Panc1 (cell line): ENCODE measurements at regions of chr13 and their contacts with region 1.

Region 1: DNA sequence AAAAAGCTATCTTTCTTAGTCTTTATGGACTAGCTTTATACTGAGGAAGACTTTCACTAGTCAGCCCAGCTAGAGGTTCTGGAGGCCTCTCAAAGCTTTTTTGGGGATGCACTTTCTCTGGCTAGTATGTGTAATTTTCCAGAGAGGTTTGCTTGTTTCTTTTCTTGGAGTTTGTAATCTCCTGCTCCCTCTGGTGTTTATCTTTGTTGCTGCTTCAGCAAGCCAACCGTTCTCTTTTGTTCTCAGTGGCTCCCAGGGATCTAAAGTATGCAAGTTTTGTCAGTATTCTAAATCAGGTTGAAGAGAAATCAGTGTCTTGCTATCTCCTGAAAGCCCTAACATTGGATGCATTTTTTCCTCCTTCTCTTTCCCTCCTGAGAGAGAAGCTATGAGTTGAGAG is 121.1 kb upstream of the MYO16 start:
- DNase-seq: no peak
- ATAC-seq: no peak
- H3K4me3 ChIP-seq: no peak overlapping the region
- H3K27ac ChIP-seq: no peak overlapping the region
- H3K4me1 ChIP-seq: no peaks in the 10 kb centered on the region
- H3K27me3 ChIP-seq: no peaks in the 10 kb centered on the region
- CTCF ChIP-seq: peak; percentile 24; the same call in 1 of the 2 replicates

Region 2: GRCh38 chr13:108322206-108322824 is 185.9 kb before region 1 on chr13:
- CTCF ChIA-PET with region 1: no interaction called
- POLR2A ChIA-PET with region 1: no interaction called
- in situ Hi-C with region 1: no loop called
- intact Hi-C with region 1: loop called (anchors 5 kb)
- DNase-seq: peak; percentile 10
- ATAC-seq: peak; percentile 76
- H3K4me3 ChIP-seq: no peak overlapping the region
- H3K27ac ChIP-seq: no peak overlapping the region
- H3K4me1 ChIP-seq: no peaks in the 10 kb centered on the region
- H3K27me3 ChIP-seq: no peaks in the 10 kb centered on the region
- CTCF ChIP-seq: peak; percentile 57; the same call in 1 of the 2 replicates

Region 3: DNA sequence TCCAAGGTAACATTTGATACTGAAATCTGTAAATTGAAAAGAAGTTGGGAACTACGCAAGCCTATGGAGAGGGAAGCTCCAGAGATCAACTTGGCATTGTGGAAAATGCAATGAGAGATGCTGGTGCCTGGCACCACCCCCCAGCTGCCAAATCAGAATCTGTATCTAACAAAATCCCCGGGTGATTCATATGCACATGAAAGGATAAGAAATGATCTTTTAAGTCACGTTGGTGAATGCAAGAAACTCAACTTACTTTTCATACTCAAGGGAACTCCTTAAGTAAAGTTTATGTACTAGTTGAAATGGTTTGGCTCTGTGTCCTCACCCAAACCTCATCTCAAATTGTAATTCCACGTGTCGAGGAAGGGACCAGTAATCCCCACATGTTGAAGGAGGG is 37.3 kb before region 1 on chr13:
- CTCF ChIA-PET with region 1: no interaction called
- POLR2A ChIA-PET with region 1: no interaction called
- in situ Hi-C with region 1: no loop called
- intact Hi-C with region 1: no loop called
- DNase-seq: no peak
- ATAC-seq: no peak
- H3K4me3 ChIP-seq: no peak overlapping the region
- H3K27ac ChIP-seq: no peak overlapping the region
- H3K4me1 ChIP-seq: no peaks in the 10 kb centered on the region
- H3K27me3 ChIP-seq: no peaks in the 10 kb centered on the region
- CTCF ChIP-seq: no peak